Common myeloid progenitor, CD34-positive (primary cell): ENCODE measurements at regions of chr19 and their contacts with region 1.

Region 1: DNA sequence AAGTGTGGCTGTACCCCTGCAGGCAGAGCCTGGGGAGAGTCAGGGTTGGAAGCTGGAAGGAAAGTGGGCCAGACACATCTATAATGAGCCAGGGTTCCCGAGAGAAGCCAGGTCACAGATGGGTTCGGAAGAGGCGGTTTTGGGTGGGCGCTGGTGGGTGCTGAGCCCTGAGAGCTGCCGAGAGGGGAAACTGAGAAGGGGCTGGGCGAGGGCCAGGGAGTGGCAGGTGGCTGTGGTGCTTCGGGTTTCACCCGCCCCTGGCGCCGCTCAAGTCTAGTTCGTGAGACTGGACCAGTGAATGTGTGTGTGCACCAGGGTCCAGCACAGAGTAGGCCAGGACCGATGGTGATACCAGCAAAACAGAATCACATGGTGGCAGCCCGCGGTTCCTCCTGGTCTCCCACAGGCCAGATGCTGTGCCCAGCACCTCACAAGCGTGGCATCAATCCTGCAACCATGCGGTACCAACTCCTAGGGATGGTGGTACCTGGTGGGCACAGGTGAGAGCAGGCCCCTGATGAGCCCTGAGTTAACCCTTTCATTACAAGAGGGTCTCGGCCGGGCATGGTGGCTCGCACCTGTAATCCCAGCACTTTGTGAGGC is 1.8 kb upstream of the LRRC4B start:
- DNase-seq: no peak
- H3K4me3 ChIP-seq: no peak overlapping the region
- H3K27ac ChIP-seq: no peak overlapping the region
- H3K4me1 ChIP-seq: peaks cover 0 to 3% (median 0%) of the 10 kb centered on the region in 4 experiments
- H3K27me3 ChIP-seq: peaks cover 0 to 62% (median 13%) of the 10 kb centered on the region in 5 experiments

Region 2: DNA sequence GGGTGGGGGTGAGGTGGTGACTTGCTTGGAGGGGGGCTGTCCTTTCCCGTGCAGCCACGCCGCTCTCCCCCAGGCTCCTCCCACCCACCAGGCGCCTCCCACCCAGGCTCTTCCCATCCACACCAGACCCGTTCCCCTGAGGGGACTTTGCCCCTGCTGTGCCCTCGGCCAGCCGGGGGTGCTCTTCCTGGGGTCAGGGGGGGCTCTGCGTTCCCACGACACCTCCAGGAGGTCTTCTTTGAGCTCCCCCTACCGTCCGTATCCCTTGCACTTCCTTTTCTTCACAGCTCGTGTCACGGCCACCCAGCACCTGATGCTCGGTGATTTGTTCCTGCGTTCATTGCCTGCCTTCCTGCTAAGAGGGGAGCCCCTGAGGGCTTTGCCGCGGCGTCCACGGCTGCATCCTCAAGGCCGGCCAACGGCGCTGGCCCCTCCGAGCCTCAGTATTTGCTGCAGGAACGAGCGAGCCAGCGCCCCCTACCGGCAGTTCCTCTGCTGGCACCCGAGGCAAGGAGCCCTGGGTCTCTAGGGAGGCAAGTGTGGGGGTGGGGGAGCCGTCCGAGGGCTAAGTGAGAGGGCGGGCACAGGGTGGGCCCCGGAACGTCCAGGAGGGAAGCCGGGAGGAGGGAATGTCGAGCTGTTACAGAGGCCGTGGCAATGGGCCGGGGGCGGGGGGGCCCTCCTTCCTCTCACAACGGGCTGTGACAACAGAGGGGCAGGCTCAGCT is 13.6 kb before region 1 on chr19:
- CTCF ChIA-PET with region 1: interaction called, 10 read pairs
- POLR2A ChIA-PET with region 1: no interaction called
- DNase-seq: peak; percentile 70 to 85 (median 83)
- H3K4me3 ChIP-seq: peak overlapping the region in 6 of 7 experiments; percentile 37 to 81 (median 63)
- H3K27ac ChIP-seq: no peak overlapping the region
- H3K4me1 ChIP-seq: peaks cover 0 to 14% (median 9%) of the 10 kb centered on the region in 4 experiments
- H3K27me3 ChIP-seq: peaks cover 0 to 72% (median 22%) of the 10 kb centered on the region in 5 experiments

Region 3: DNA sequence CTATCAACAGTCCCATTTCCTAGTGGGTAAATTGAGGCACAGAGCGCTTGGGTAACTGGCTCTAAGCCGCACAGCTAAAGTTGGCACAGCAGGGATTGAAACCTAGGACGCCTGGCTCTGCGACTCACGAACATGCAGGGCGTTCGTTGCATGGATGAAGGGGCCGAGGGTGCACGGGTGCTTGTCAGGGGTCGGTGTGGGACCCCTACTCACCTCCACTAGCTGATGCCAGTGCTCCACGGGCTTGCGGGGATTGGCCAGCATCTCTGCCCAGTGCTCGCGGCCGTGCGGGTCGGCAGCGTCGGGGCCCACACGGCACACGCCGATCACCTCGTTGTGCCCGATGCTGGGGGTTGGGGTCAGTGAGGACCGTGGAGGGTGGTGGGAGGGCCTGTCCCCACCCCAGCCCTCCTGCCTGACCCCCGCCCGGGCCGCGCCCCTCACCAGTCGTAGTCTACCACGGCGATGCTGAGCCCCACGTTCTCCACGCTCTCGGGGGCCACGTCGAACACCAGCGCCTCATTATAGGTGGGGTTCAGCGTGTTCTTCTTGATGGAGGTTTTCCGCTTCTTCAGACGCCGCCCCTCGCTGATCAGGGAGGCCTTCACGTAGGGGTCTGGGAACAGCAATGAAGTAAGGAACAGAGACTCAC is 55.0 kb after region 1 on chr19:
- CTCF ChIA-PET with region 1: no interaction called
- POLR2A ChIA-PET with region 1: no interaction called
- DNase-seq: no peak
- H3K4me3 ChIP-seq: no peak overlapping the region
- H3K27ac ChIP-seq: no peak overlapping the region
- H3K4me1 ChIP-seq: no peaks in the 10 kb centered on the region
- H3K27me3 ChIP-seq: peaks cover 0 to 6% (median 0%) of the 10 kb centered on the region in 5 experiments